PC-9 (cell line): ENCODE measurements at regions of chr2 and their contacts with region 1.

Region 1: DNA sequence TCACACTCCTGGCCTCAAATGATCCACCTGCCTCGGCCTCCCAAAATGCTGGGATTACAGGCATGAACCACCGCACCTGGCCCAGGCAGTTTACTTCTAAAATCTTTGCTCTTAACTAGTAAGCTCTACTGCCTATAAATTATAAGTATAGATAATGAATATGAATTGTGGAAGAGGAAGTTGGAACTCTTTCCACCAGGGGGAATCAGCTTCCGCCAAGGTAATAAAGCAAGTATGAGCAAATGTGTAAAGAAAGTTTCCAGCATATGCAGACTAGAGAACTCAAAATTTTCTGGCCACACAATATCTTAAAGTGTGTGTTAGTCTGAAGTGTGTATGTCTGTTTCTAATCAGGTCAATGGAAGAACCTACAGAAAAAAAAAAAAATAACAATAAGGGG is 68.1 kb downstream of the RMDN2 start:
- DNase-seq: no peak
- H3K4me3 ChIP-seq: no peak overlapping the region
- H3K27ac ChIP-seq: no peak overlapping the region
- H3K4me1 ChIP-seq: no peaks in the 10 kb centered on the region
- H3K27me3 ChIP-seq: no peaks in the 10 kb centered on the region
- CTCF ChIP-seq: peak; percentile 42; the same call in 1 of the 2 replicates

Region 2: DNA sequence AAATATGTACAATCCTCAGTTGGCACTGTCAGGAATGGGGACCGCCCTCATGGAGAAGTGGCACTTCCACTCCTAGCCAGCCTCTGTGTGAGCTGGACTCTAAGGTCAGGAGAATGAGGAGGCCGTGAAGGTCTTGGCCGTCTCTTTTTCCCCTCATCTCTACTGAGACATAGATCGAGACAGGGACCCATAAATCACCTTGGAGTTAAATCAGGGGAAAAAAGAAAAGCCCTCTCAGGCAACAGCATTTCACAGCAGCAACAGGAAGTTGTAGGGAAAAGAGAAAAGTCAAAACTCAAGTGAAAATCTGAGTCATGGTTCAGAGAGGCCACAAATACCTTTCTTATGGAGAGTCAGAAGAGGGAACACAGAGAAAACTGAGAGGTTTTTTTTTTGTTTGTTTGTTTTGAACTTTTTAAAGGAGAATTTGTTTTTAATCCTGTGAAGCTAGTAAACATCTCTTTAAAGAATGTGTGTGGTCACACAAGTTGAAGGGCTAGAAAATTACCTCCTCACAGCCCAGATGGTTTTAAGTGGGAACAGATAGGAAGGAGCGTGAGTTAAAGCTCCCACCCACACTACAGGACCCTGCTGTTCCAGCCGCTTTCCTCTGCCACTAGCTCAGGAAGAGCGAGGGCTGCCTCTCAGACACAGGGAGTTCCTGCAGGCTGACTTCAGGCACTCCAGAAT is 113.4 kb after region 1 on chr2:
- CTCF ChIA-PET with region 1: interaction called, 17 read pairs
- POLR2A ChIA-PET with region 1: no interaction called
- intact Hi-C with region 1: no loop called
- DNase-seq: peak; percentile 19 to 93
- H3K4me3 ChIP-seq: no peak overlapping the region
- H3K27ac ChIP-seq: peak overlapping the region; percentile 96
- H3K4me1 ChIP-seq: peaks cover 23% of the 10 kb centered on the region
- H3K27me3 ChIP-seq: no peaks in the 10 kb centered on the region
- CTCF ChIP-seq: no peak